GM12878 (cell line): ENCODE measurements at regions of chr7 and their contacts with region 1.

Region 1: DNA sequence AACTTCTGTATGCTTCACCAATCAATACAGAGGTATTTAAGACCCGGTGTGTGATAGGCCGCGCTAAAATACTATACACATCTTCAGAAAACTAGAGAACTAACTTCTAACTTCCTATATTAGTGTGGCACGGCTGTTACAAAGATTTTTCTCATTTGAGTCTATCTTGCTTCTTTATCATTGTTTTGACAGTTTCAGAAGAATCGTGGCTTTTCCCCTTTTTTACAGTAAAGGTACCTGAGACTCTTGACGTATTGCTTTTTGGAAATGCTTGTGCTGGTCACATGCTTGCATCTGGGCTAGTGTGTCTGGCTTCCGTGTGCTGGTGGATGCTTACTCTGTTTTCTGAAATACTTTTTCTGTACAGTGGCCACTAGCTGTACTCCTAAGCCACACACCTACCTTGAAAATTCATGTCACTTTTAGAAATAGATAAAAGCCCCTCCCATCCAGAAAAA is 12.7 kb downstream of the IKZF1 start:
- DNase-seq: no peak
- ATAC-seq: peak; percentile 82
- H3K4me3 ChIP-seq: no peak overlapping the region
- H3K27ac ChIP-seq: peak overlapping the region; percentile 66; the same call in 1 of the 2 replicates
- H3K4me1 ChIP-seq: peaks cover 47% of the 10 kb centered on the region
- H3K27me3 ChIP-seq: no peaks in the 10 kb centered on the region
- CTCF ChIP-seq: no peak; a peak in 1 of 6 replicates
- EP300 ChIP-seq: no peak
- POLR2A ChIP-seq: no peak
- RAD21 ChIP-seq: no peak

Region 2: DNA sequence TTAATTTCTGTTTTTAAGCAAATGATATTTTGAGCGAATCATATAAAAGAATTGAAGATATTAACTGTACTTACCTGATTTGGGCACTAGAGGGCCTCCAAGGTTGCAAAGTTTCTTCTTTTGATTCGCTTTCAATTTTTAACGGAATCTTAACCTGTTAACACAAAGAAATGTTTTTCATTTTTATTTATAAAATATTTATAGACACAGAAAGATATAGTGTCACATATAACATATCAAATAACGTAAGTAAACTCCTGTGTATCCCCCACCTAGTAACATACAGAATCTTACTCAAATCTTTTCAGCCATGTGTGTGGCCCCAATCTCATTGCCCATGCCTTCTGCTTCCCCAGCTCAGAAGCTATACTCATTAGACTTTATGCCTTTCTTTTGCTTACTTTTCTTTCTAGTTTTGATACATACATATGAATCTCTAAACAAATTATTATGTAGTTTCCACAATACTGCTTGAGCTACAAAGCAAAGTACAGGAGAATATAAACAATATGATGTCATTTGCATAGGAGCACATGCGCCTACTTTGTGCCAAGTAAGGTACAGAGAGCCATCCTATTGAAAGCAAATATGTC is 174.7 kb before region 1 on chr7:
- CTCF ChIA-PET with region 1: interaction called, 4 read pairs
- POLR2A ChIA-PET with region 1: interaction called, 4 read pairs
- RAD21 ChIA-PET with region 1: interaction called, 14 read pairs
- SMC1A ChIA-PET with region 1: interaction called, 25 read pairs
- in situ Hi-C with region 1: no loop called
- intact Hi-C with region 1: no loop called
- DNase-seq: peak; percentile 24
- ATAC-seq: peak; percentile 51
- H3K4me3 ChIP-seq: no peak overlapping the region
- H3K27ac ChIP-seq: no peak overlapping the region
- H3K4me1 ChIP-seq: peaks cover 24% of the 10 kb centered on the region
- H3K27me3 ChIP-seq: no peaks in the 10 kb centered on the region; a peak in 1 of 4 replicates
- CTCF ChIP-seq: peak; percentile 55 to 61 (median 60)
- EP300 ChIP-seq: no peak
- POLR2A ChIP-seq: no peak
- RAD21 ChIP-seq: peak; percentile 85

Region 3: GRCh38 chr7:50212666-50213621 is 104.3 kb before region 1 on chr7:
- CTCF ChIA-PET with region 1: interaction called, 7 read pairs
- POLR2A ChIA-PET with region 1: no interaction called
- RAD21 ChIA-PET with region 1: interaction called, 3 read pairs
- SMC1A ChIA-PET with region 1: interaction called, 21 read pairs
- in situ Hi-C with region 1: no loop called
- intact Hi-C with region 1: no loop called
- DNase-seq: no peak
- ATAC-seq: peak; percentile 70
- H3K4me3 ChIP-seq: no peak overlapping the region
- H3K27ac ChIP-seq: no peak overlapping the region
- H3K4me1 ChIP-seq: peaks cover 9% of the 10 kb centered on the region
- H3K27me3 ChIP-seq: no peaks in the 10 kb centered on the region
- CTCF ChIP-seq: peak; percentile 20 to 47 (median 25); a peak in 3 of 6 replicates
- EP300 ChIP-seq: 0 out of 4 replicates have a peak, but pooled peaks of 1 of the 2 experiments have one; percentile 11
- POLR2A ChIP-seq: no peak
- RAD21 ChIP-seq: peak; percentile 61

Region 4: GRCh38 chr7:50293509-50294179 is 23.6 kb before region 1 on chr7:
- CTCF ChIA-PET with region 1: interaction called, 6 read pairs
- POLR2A ChIA-PET with region 1: interaction called, 14 read pairs
- RAD21 ChIA-PET with region 1: interaction called, 6 read pairs
- SMC1A ChIA-PET with region 1: interaction called, 107 read pairs
- in situ Hi-C with region 1: no loop called
- intact Hi-C with region 1: no loop called
- DNase-seq: no peak
- ATAC-seq: peak; percentile 77
- H3K4me3 ChIP-seq: 0 out of 2 replicates have a peak overlapping the region, but pooled peaks have one; percentile 3
- H3K27ac ChIP-seq: peak overlapping the region; percentile 36
- H3K4me1 ChIP-seq: peaks cover 22% of the 10 kb centered on the region
- H3K27me3 ChIP-seq: no peaks in the 10 kb centered on the region
- CTCF ChIP-seq: no peak
- EP300 ChIP-seq: peak in 1 of 2 experiments; percentile 67; a peak in 1 of 4 replicates
- POLR2A ChIP-seq: no peak
- RAD21 ChIP-seq: no peak

Region 5: DNA sequence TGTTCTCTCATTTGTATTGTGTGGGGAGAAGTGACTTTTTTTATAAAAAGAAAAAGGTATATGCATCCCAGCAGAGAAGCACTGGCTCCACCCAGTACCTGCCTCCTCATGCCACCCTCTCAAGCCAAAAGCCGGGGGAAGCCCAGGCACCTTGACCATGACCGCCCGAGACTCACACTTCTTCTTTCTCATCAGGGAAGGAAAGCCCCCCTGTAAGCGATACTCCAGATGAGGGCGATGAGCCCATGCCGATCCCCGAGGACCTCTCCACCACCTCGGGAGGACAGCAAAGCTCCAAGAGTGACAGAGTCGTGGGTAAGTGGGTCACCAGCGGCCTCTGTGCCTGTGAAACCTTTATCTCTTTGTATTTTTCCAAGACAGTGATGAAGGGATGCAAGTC is 10.2 kb after region 1 on chr7:
- CTCF ChIA-PET with region 1: interaction called, 32 read pairs
- POLR2A ChIA-PET with region 1: interaction called, 14 read pairs
- RAD21 ChIA-PET with region 1: interaction called, 45 read pairs
- SMC1A ChIA-PET with region 1: interaction called, 131 read pairs
- in situ Hi-C with region 1: no loop called
- intact Hi-C with region 1: no loop called
- DNase-seq: no peak
- ATAC-seq: peak; percentile 80
- H3K4me3 ChIP-seq: no peak overlapping the region
- H3K27ac ChIP-seq: peak overlapping the region; percentile 44
- H3K4me1 ChIP-seq: peaks cover 44% of the 10 kb centered on the region
- H3K27me3 ChIP-seq: no peaks in the 10 kb centered on the region
- CTCF ChIP-seq: no peak; a peak in 1 of 6 replicates
- EP300 ChIP-seq: peak in 1 of 2 experiments; percentile 83; a peak in 2 of 4 replicates
- POLR2A ChIP-seq: no peak
- RAD21 ChIP-seq: peak; percentile 19; the same call in 1 of the 2 replicates

Region 6: GRCh38 chr7:50349963-50350944 is 33.0 kb after region 1 on chr7:
- CTCF ChIA-PET with region 1: interaction called, 6 read pairs
- POLR2A ChIA-PET with region 1: interaction called, 7 read pairs
- RAD21 ChIA-PET with region 1: interaction called, 42 read pairs
- SMC1A ChIA-PET with region 1: interaction called, 13 read pairs
- in situ Hi-C with region 1: no loop called
- intact Hi-C with region 1: no loop called
- DNase-seq: peak; percentile 84
- ATAC-seq: peak; percentile 90
- H3K4me3 ChIP-seq: no peak overlapping the region
- H3K27ac ChIP-seq: peak overlapping the region; percentile 86
- H3K4me1 ChIP-seq: peaks cover 31% of the 10 kb centered on the region
- H3K27me3 ChIP-seq: no peaks in the 10 kb centered on the region
- CTCF ChIP-seq: no peak
- EP300 ChIP-seq: peak; percentile 78 to 84
- POLR2A ChIP-seq: peak; percentile 44; the same call in 1 of the 2 replicates
- RAD21 ChIP-seq: 0 out of 2 replicates have a peak, but pooled peaks have one; percentile 24

Region 7: GRCh38 chr7:50610521-50611277 is 293.4 kb after region 1 on chr7:
- CTCF ChIA-PET with region 1: no interaction called
- POLR2A ChIA-PET with region 1: no interaction called
- RAD21 ChIA-PET with region 1: no interaction called
- SMC1A ChIA-PET with region 1: no interaction called
- in situ Hi-C with region 1: no loop called
- intact Hi-C with region 1: no loop called
- DNase-seq: no peak
- ATAC-seq: peak; percentile 74
- H3K4me3 ChIP-seq: no peak overlapping the region
- H3K27ac ChIP-seq: no peak overlapping the region
- H3K4me1 ChIP-seq: no peaks in the 10 kb centered on the region
- H3K27me3 ChIP-seq: peaks cover 0 to 4% of the 10 kb centered on the region in 2 experiments; a peak in 1 of 4 replicates
- CTCF ChIP-seq: no peak
- EP300 ChIP-seq: no peak
- POLR2A ChIP-seq: no peak
- RAD21 ChIP-seq: no peak